ENCODE measurements at regions of chr10 and their contacts with region 1.

Region 1: GRCh38 chr10:70744617-70745143 is 40.5 kb downstream of the TBATA start:
- DNase-seq: peak in 1 of 6 donors; percentile 4
- ATAC-seq: no peak
- H3K4me3 ChIP-seq: no peak overlapping the region
- H3K27ac ChIP-seq: no peak overlapping the region
- H3K4me1 ChIP-seq: no peaks in the 10 kb centered on the region
- H3K27me3 ChIP-seq: no peaks in the 10 kb centered on the region
- CTCF ChIP-seq: no peak

Region 2: GRCh38 chr10:70466951-70467350 is 277.7 kb before region 1 on chr10:
- intact Hi-C with region 1: loop called in 1 of 3 experiments (anchors 5 kb)
- DNase-seq: no peak
- ATAC-seq: no peak
- H3K4me3 ChIP-seq: no peak overlapping the region
- H3K27ac ChIP-seq: no peak overlapping the region
- H3K4me1 ChIP-seq: no peaks in the 10 kb centered on the region
- H3K27me3 ChIP-seq: no peaks in the 10 kb centered on the region
- CTCF ChIP-seq: no peak

Region 3: DNA sequence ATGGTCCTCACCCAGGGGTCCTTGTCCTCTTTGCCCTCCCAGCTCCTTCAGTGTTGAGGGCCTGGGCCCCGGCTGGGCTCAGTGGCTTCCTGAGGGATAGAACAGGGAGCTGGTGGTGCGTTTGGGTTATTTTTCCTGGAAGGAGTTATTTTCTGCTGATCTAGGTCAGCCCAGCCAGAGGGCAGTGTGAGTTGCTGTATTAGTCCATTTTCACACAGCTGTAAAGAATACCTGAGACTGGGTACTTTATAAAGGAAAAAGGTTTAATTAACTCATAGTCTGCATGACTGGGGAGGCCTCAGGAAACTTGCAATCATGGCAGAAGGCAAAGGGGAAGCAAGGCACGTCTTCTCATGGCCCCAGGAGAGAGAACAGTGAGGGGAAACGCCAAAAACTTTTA is 266.1 kb after region 1 on chr10:
- intact Hi-C with region 1: no loop called
- DNase-seq: no peak
- ATAC-seq: no peak
- H3K4me3 ChIP-seq: no peak overlapping the region
- H3K27ac ChIP-seq: no peak overlapping the region
- H3K4me1 ChIP-seq: no peaks in the 10 kb centered on the region
- H3K27me3 ChIP-seq: no peaks in the 10 kb centered on the region
- CTCF ChIP-seq: no peak

Measured in pancreas (tissue), 10 donors.